Left ventricle myocardium inferior (tissue), 1 donor: ENCODE measurements at regions of chr6 and their contacts with region 1.

Region 1: GRCh38 chr6:20534295-20535262 is at the start of gene CDKAL1:
- DNase-seq: peak; percentile 91
- H3K4me3 ChIP-seq: peak within 1 kb of the TSS; percentile 86
- H3K27ac ChIP-seq: peak within 1 kb of the TSS; percentile 81
- H3K4me1 ChIP-seq: peaks cover 20% of the 10 kb centered on the region
- H3K27me3 ChIP-seq: no peaks in the 10 kb centered on the region
- CTCF ChIP-seq: no peak
- total RNA-seq, gene CDKAL1: 9.1 TPM

Region 2: GRCh38 chr6:20092071-20092566 is 442.5 kb before region 1 on chr6:
- intact Hi-C with region 1: loop called (anchors 5 kb)
- DNase-seq: no peak
- H3K4me3 ChIP-seq: no peak overlapping the region
- H3K27ac ChIP-seq: no peak overlapping the region
- H3K4me1 ChIP-seq: no peaks in the 10 kb centered on the region
- H3K27me3 ChIP-seq: no peaks in the 10 kb centered on the region
- CTCF ChIP-seq: peak; percentile 80

Region 3: DNA sequence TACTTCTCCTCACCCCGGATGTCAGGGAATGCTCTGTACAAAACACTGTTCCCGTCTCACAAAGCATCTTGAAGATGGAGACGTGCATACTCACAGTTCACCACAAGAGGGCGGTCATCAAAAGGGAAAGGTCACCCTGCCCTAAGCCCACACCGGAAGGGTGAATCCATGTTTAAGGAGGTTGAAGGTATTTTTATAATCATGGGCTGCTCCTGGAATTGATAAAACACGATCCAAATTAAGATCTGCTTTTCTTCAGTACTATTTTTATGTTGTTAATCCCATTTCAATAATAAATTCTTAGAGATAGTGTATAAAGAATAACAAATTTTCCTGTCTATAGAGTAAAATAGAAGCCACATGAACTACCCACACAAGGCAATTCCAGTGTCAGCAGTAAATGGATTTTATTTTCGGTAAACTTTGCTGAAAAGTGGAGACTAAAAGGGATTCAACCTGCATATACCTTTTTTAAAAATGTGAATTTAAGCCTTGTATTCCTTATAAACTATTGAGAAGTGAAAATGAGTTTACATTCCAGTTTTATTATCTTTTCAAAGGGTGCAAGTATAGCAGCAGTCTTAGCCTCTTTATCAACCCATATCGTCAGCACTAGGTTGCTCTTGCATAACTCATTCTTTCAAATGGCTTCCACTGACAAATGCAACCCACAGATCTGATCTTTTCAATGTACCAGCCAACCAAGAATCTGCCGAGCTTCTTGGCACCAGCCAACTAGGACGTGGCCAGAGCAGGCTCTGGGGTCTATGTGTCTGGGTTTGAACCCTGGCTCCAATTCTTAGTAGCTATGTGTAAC is 242.6 kb before region 1 on chr6:
- intact Hi-C with region 1: loop called (anchors 5 kb)
- DNase-seq: peak; percentile 62
- H3K4me3 ChIP-seq: no peak overlapping the region
- H3K27ac ChIP-seq: no peak overlapping the region
- H3K4me1 ChIP-seq: no peaks in the 10 kb centered on the region
- H3K27me3 ChIP-seq: no peaks in the 10 kb centered on the region
- CTCF ChIP-seq: peak; percentile 95

Region 4: GRCh38 chr6:20401205-20402091 is 133.1 kb before region 1 on chr6 and contains the start of gene E2F3:
- intact Hi-C with region 1: loop called (anchors 5 kb)
- DNase-seq: peak; percentile 99
- H3K4me3 ChIP-seq: peak within 1 kb of the TSS; percentile 86
- H3K27ac ChIP-seq: peak within 1 kb of the TSS; percentile 88
- H3K4me1 ChIP-seq: peaks cover 44% of the 10 kb centered on the region
- H3K27me3 ChIP-seq: no peaks in the 10 kb centered on the region
- CTCF ChIP-seq: no peak
- total RNA-seq, gene E2F3: 6.7 TPM